ENCODE measurements at regions of chr9 and their contacts with region 1.

Region 1: DNA sequence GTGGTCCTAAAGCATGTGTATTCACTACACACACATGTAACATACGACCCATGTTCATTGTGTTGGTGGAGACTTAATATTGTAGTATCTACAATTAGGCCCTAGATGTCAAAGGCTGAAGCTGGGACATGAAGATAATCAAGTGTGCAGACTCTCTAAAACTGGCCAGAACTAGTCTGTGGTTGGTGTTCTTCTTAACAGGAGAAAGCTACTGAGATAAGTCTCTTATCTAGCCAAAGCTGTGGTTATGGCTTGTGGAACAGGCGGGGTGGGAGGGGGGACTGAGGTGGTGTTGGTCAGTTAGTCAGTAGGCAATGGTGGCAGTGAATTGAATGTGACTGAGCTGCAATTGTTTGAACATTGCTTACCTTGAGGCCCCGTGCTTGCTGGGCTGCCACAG is 112.7 kb upstream of the SLC24A2 start:
- DNase-seq: no peak
- ATAC-seq: no peak
- H3K4me3 ChIP-seq: no peak overlapping the region
- H3K27ac ChIP-seq: no peak overlapping the region
- H3K4me1 ChIP-seq: no peaks in the 10 kb centered on the region
- H3K27me3 ChIP-seq: no peaks in the 10 kb centered on the region
- CTCF ChIP-seq: no peak
- EP300 ChIP-seq: no peak
- POLR2A ChIP-seq: no peak
- RAD21 ChIP-seq: no peak

Region 2: GRCh38 chr9:19840953-19841352 is 60.6 kb before region 1 on chr9:
- CTCF ChIA-PET with region 1: no interaction called
- POLR2A ChIA-PET with region 1: no interaction called
- in situ Hi-C with region 1: loop called (anchors 10 kb)
- intact Hi-C with region 1: no loop called
- DNase-seq: no peak
- ATAC-seq: no peak
- H3K4me3 ChIP-seq: no peak overlapping the region
- H3K27ac ChIP-seq: no peak overlapping the region
- H3K4me1 ChIP-seq: no peaks in the 10 kb centered on the region
- H3K27me3 ChIP-seq: no peaks in the 10 kb centered on the region
- CTCF ChIP-seq: no peak
- EP300 ChIP-seq: no peak
- POLR2A ChIP-seq: no peak
- RAD21 ChIP-seq: no peak

Measured in HepG2 (cell line).